Colonic mucosa (tissue), 4 donors: ENCODE measurements at regions of chr1 and their contacts with region 1.

Region 1: DNA sequence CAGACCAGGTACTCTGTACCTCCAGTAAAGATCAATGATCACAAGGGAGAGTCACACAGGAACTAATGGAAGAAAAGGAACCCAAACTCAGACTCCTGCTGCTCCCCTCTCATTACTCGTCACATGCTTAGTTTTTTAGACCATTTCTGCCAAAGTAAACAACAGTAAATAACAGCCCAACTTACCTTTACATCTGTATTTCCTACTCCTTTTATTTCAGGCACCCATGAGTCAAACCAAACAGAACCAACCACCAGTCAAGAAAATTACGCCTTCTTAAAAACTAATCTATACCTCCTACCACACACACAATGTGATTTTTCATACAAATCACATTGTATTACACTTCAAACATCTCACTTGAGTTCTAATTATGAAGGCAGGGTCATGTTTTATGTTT is 61.4 kb upstream of the HTR1D start:
- DNase-seq: no peak
- H3K4me3 ChIP-seq: no peak overlapping the region
- H3K27ac ChIP-seq: no peak overlapping the region
- H3K4me1 ChIP-seq: no peaks in the 10 kb centered on the region
- H3K27me3 ChIP-seq: no peaks in the 10 kb centered on the region
- CTCF ChIP-seq: no peak

Region 2: GRCh38 chr1:22944346-22945055 is 334.2 kb before region 1 on chr1:
- intact Hi-C with region 1: no loop called
- DNase-seq: no peak
- H3K4me3 ChIP-seq: no peak overlapping the region
- H3K27ac ChIP-seq: no peak overlapping the region
- H3K4me1 ChIP-seq: no peaks in the 10 kb centered on the region
- H3K27me3 ChIP-seq: no peaks in the 10 kb centered on the region
- CTCF ChIP-seq: no peak

Region 3: GRCh38 chr1:23216771-23217420 is 61.8 kb before region 1 on chr1:
- intact Hi-C with region 1: loop called (anchors 5 kb)
- DNase-seq: peak; percentile 34
- H3K4me3 ChIP-seq: peak overlapping the region; percentile 51
- H3K27ac ChIP-seq: no peak overlapping the region
- H3K4me1 ChIP-seq: no peaks in the 10 kb centered on the region
- H3K27me3 ChIP-seq: peaks cover 21% of the 10 kb centered on the region
- CTCF ChIP-seq: peak; percentile 80